ENCODE measurements at regions of chr17 and their contacts with region 1.

Region 1: DNA sequence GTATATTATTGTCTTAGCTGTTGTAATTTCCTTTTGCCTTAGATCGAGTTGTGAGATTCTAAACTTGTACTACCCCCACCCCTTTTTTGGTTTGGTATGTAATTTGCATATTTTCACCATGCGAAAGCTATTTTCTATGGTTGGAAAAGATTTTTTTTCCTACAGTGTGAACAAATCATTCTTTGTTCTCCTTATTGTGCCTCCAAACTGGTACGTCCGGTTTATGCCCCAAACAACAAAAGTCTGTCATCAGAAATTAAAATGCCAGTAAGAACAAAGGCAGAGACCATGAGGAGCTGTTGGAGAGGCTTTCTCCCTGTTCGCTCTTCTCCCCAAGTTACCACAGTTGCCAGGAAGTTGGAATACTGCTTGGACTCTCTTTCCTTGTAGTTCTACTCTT is 66.1 kb downstream of the BCAS3 start:
- DNase-seq: no peak
- H3K4me3 Mint-ChIP-seq: no peak overlapping the region
- H3K27ac Mint-ChIP-seq: no peak overlapping the region
- H3K4me1 Mint-ChIP-seq: no peaks in the 10 kb centered on the region
- H3K27me3 Mint-ChIP-seq: no peaks in the 10 kb centered on the region

Region 2: DNA sequence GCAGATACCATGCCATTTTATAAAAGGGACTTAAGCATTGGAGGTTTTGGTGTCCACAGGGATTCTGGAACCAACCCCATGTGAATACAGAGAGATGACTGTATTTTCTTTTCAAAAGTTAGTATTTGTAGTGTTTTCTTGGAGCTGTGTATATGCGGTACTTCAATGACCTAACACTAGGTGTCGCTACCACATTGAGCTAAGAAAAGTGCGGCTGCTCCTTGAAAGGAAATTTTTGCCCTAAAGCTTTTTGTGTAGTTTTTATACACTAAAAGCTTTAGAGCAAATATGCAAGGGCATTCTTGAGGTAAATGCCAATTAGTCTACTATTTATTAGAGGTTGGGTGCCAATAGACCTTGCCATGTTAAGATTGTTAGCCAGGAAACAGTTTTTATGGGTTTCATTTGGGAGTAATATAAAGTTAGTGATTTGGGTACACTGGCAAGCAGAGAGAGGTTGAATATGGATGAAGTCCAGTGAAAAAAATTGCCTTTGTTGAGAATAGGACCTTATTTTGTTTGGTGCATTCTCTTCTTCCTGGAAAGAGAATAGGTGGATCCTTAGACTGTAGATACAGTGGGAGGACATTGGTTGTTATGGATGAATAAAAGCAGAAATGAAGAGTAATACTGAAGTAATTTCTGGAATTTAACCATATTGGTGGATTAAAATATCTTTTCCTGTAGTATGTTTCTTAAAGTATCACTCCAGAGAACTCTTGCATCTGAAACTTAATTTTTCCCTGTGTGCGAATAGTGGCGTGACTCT is 22.9 kb before region 1 on chr17:
- CTCF ChIA-PET with region 1: interaction called, 17 read pairs
- POLR2A ChIA-PET with region 1: no interaction called
- intact Hi-C with region 1: no loop called
- DNase-seq: peak; percentile 36
- H3K4me3 Mint-ChIP-seq: no peak overlapping the region
- H3K27ac Mint-ChIP-seq: no peak overlapping the region
- H3K4me1 Mint-ChIP-seq: no peaks in the 10 kb centered on the region
- H3K27me3 Mint-ChIP-seq: no peaks in the 10 kb centered on the region